ENCODE measurements at regions of chr4 and their contacts with region 1.

Region 1: GRCh38 chr4:80072744-80073472 is at the start of gene ANTXR2:
- DNase-seq: peak; percentile 97
- ATAC-seq: peak; percentile 96
- total RNA-seq, gene ANTXR2: 49.7 TPM

Region 2: DNA sequence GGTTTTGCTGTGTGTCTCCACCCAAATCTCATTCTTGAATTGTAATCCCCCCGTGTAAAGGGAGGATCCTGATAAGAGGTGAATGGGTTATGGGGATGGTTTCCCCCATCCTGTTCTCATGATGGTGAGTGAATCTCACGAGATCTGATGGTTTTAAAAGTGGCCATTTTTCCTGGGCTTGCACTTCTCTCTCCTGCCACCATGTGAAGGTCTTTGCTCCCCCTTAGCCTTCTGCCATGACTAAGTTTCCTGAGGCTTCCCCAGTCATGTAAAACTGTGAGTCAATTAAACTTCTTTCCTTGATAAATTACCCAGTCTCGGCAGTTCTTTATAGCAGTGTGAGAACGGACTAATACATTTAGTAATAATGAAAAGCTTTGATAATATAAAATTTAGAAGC is 46.8 kb before region 1 on chr4:
- intact Hi-C with region 1: no loop called
- DNase-seq: no peak
- ATAC-seq: no peak

Region 3: GRCh38 chr4:80036949-80037685 is 35.8 kb before region 1 on chr4:
- intact Hi-C with region 1: loop called (anchors 2 kb)
- DNase-seq: no peak
- ATAC-seq: peak; percentile 94

Region 4: DNA sequence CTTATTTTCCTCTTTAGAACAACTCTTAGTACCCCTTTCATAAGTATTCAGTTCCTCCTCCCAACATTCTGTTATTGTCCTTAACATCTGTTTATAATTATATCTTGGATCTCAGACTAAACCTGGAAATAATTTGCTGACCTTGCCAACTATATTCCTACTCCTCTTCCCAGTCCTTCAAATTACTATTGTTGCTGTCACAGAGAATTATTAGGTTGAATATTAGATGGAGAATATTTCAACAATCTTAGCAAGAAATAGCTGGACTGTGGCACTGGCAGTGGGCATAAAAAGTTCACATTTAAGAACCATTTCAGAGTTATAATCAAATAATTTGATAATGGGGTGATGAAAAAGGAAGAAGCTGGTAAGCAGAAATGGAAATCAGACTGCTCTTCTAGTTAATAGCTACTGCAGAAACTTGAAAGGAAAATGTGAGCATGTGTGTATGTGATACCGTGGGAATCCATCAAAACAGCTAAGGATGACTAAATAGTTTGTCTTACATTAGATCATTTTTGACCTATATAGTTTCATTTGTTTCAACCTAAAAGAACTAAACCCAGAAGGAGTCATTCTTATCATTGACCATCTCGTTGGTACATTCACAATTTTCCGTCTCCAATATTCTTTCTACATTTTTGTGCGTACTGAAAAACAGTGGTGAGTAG is 81.1 kb after region 1 on chr4:
- intact Hi-C with region 1: no loop called
- DNase-seq: no peak
- ATAC-seq: no peak